ENCODE measurements at regions of chr5 and their contacts with region 1.

Region 1: DNA sequence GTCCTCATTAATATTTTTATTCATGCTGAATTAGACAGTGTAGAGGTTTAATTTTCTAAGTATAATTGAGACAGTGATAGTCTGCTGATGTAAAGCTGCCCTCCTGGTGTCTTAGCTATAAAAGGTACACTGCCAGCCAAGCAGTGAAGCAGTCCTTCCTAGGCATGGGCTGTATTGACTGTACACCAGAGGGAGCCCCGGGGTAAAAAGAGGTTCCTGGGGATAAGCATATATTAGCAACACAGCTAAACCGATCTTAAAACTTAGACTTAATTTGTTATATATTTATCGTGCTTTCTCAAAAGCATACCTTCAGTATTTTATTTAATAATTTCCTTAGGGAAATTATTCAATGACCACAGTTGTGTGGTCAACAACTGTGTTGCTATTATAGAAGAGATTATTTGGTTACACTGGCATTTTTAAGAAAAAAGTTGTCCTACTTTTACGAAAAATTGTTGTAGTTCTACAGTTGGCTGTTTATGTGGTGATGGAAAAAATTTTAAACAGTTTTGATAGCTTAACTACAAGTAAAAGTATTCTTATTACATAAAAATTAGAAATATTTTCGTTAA is 68.8 kb downstream of the ELL2 start:
- DNase-seq: peak in 1 of 9 donors; percentile 2
- ATAC-seq: peak; percentile 65
- H3K4me3 ChIP-seq: no peak overlapping the region
- H3K4me3 Mint-ChIP-seq: no peak overlapping the region
- H3K27ac ChIP-seq: no peak overlapping the region
- H3K27ac Mint-ChIP-seq: no peak overlapping the region
- H3K4me1 ChIP-seq: no peaks in the 10 kb centered on the region
- H3K4me1 Mint-ChIP-seq: peaks cover 0 to 14% (median 0%) of the 10 kb centered on the region in 7 donors
- H3K27me3 ChIP-seq: no peaks in the 10 kb centered on the region
- H3K27me3 Mint-ChIP-seq: no peaks in the 10 kb centered on the region

Region 2: GRCh38 chr5:95927927-95928723 is 35.3 kb after region 1 on chr5:
- CTCF ChIA-PET with region 1: no interaction called
- POLR2A ChIA-PET with region 1: no interaction called
- intact Hi-C with region 1: no loop called
- DNase-seq: no peak
- ATAC-seq: peak; percentile 5
- H3K4me3 ChIP-seq: no peak overlapping the region
- H3K4me3 Mint-ChIP-seq: peak overlapping the region in 1 of 10 donors; percentile 55
- H3K27ac ChIP-seq: no peak overlapping the region
- H3K27ac Mint-ChIP-seq: peak overlapping the region in 1 of 9 donors; percentile 82
- H3K4me1 ChIP-seq: no peaks in the 10 kb centered on the region
- H3K4me1 Mint-ChIP-seq: peaks cover 0 to 58% (median 6%) of the 10 kb centered on the region in 7 donors
- H3K27me3 ChIP-seq: no peaks in the 10 kb centered on the region
- H3K27me3 Mint-ChIP-seq: no peaks in the 10 kb centered on the region

Region 3: DNA sequence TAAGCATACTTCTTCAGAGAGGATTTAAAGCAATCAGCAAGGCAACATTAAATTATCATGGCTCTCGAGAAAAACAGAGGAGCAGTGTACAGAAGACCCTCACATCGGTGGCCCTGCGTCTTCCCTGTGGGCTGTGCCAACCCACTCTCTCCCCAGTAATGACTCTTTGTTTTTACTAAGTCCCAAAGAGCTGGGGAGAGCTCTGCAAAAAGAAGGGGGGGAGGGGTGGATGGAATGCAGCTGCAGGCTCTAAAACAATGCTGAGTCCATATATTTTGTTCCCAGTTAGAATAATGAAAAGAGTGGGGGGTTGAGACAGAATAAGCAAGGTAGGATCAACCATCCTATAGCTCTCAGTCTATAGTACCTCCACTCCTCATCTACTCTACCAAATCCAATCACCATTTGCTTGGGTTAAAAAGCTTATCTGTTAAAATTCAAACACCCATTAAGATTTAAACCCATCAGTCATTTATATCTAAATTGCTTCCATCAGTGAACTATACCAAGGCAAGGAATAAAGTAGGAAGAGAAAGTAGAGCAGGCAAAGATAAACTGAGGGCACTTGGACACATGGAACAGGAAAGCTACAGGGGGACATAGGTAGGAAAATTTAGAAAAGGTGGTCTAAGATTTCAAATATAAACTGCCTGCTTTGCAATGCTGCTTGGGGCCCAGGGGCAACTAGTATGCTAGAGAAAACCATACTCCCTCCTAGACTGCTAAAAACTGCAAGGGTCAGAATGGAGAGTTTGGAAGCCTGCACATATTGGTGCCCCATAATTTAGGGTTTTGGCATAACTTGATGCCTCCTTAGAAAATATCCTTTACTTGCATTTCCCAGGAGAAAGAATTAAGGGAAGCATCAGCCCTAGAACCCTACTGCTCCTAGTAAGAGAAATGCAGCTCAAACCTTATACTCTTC is 48.2 kb after region 1 on chr5:
- CTCF ChIA-PET with region 1: no interaction called
- POLR2A ChIA-PET with region 1: no interaction called
- intact Hi-C with region 1: loop called in 1 of 2 experiments (anchors 5 kb)
- DNase-seq: no peak
- ATAC-seq: no peak
- H3K4me3 ChIP-seq: no peak overlapping the region
- H3K4me3 Mint-ChIP-seq: no peak overlapping the region
- H3K27ac ChIP-seq: no peak overlapping the region
- H3K27ac Mint-ChIP-seq: no peak overlapping the region
- H3K4me1 ChIP-seq: no peaks in the 10 kb centered on the region
- H3K4me1 Mint-ChIP-seq: peaks cover 0 to 24% (median 6%) of the 10 kb centered on the region in 7 donors
- H3K27me3 ChIP-seq: no peaks in the 10 kb centered on the region
- H3K27me3 Mint-ChIP-seq: no peaks in the 10 kb centered on the region

Region 4: GRCh38 chr5:96177303-96177869 is 284.5 kb after region 1 on chr5:
- CTCF ChIA-PET with region 1: no interaction called
- POLR2A ChIA-PET with region 1: no interaction called
- intact Hi-C with region 1: no loop called
- DNase-seq: no peak
- ATAC-seq: no peak
- H3K4me3 ChIP-seq: no peak overlapping the region
- H3K4me3 Mint-ChIP-seq: no peak overlapping the region
- H3K27ac ChIP-seq: no peak overlapping the region
- H3K27ac Mint-ChIP-seq: no peak overlapping the region
- H3K4me1 ChIP-seq: no peaks in the 10 kb centered on the region
- H3K4me1 Mint-ChIP-seq: peaks cover 0 to 5% (median 0%) of the 10 kb centered on the region in 7 donors
- H3K27me3 ChIP-seq: no peaks in the 10 kb centered on the region
- H3K27me3 Mint-ChIP-seq: peaks cover 0 to 13% (median 0%) of the 10 kb centered on the region in 5 donors

Region 5: DNA sequence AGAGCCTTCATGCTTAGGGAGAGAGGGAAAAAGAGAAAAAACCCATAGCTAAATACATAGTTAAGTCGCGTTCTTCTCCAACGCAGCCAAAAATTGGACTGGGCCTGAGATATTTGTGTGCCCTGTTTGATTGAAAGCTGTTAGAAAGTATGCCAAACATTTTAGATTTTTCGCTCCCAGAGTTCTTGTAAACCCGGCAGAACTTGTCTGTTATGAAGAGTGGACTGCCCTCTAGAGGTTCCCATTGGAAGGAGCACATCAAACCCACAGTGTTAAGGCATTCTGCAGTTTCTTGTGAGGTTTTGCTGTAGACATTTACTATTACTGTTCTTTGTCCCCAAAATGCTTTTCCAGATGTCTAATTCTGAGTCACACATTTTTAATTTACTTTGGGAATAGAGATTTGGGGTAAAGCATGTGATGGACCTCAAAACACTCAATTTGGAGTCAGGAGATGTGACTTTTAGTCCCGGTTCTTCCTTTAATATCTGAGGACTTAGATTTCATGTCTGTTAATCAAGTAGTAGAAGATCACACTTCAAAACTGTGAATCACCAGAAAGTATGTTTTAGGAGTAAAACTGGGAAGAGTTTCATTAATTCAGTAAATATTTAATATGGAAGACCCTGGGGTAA is 443.6 kb after region 1 on chr5:
- CTCF ChIA-PET with region 1: interaction called, 3 read pairs
- POLR2A ChIA-PET with region 1: no interaction called
- intact Hi-C with region 1: loop called in 1 of 2 experiments (anchors 1 kb)
- DNase-seq: peak in 8 of 9 donors; percentile 41 to 72 (median 65)
- ATAC-seq: peak; percentile 92
- H3K4me3 ChIP-seq: no peak overlapping the region
- H3K4me3 Mint-ChIP-seq: no peak overlapping the region
- H3K27ac ChIP-seq: no peak overlapping the region
- H3K27ac Mint-ChIP-seq: no peak overlapping the region
- H3K4me1 ChIP-seq: no peaks in the 10 kb centered on the region
- H3K4me1 Mint-ChIP-seq: peaks cover 0 to 9% (median 0%) of the 10 kb centered on the region in 7 donors
- H3K27me3 ChIP-seq: no peaks in the 10 kb centered on the region
- H3K27me3 Mint-ChIP-seq: peaks cover 7 to 26% (median 14%) of the 10 kb centered on the region in 5 donors